HCT116 (cell line): ENCODE measurements at regions of chr20 and their contacts with region 1.

Region 1: GRCh38 chr20:9407805-9408421 is 106.5 kb upstream of the LAMP5 start:
- DNase-seq: peak; percentile 54
- ATAC-seq: peak; percentile 92
- H3K4me3 ChIP-seq: no peak overlapping the region
- H3K27ac ChIP-seq: no peak overlapping the region
- H3K4me1 ChIP-seq: peaks cover 0 to 14% of the 10 kb centered on the region in 2 experiments; a peak in 3 of 4 replicates
- H3K27me3 ChIP-seq: no peaks in the 10 kb centered on the region
- CTCF ChIP-seq: peak; percentile 63 to 86 (median 74); a peak in 5 of 6 replicates
- POLR2A ChIP-seq: no peak
- RAD21 ChIP-seq: peak; percentile 80

Region 2: DNA sequence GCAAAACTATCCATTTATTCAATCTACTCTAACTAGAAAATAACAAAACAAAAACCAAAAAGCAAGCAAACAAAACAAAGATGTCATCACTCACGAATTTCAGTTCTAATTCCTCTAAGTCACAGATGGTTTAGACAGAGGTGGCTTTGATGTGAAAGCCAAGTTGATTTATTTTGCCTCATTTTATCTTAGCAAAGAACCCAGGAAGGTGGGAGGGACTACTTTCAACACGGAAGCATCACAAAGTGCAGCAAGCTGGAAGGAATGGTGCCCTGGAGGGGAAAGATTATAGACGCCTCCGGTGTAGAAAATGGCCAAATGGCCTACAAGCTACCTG is 194.9 kb after region 1 on chr20:
- CTCF ChIA-PET with region 1: interaction called, 252 read pairs
- POLR2A ChIA-PET with region 1: no interaction called
- RAD21 ChIA-PET with region 1: no interaction called
- intact Hi-C with region 1: no loop called
- DNase-seq: no peak
- ATAC-seq: no peak
- H3K4me3 ChIP-seq: no peak overlapping the region
- H3K27ac ChIP-seq: no peak overlapping the region
- H3K4me1 ChIP-seq: no peaks in the 10 kb centered on the region
- H3K27me3 ChIP-seq: 0 out of 2 replicates have a peak, but pooled peaks cover 6% of the 10 kb centered on the region
- CTCF ChIP-seq: no peak
- POLR2A ChIP-seq: no peak
- RAD21 ChIP-seq: no peak

Region 3: GRCh38 chr20:9609887-9610502 is 202.1 kb after region 1 on chr20:
- CTCF ChIA-PET with region 1: interaction called, 252 read pairs
- POLR2A ChIA-PET with region 1: interaction called, 3 read pairs
- RAD21 ChIA-PET with region 1: interaction called, 23 to 27 read pairs
- intact Hi-C with region 1: loop called (anchors 1 kb)
- DNase-seq: peak; percentile 59
- ATAC-seq: peak; percentile 68; the same call in 1 of the 2 replicates
- H3K4me3 ChIP-seq: no peak overlapping the region
- H3K27ac ChIP-seq: no peak overlapping the region
- H3K4me1 ChIP-seq: no peaks in the 10 kb centered on the region
- H3K27me3 ChIP-seq: 0 out of 2 replicates have a peak, but pooled peaks cover 2% of the 10 kb centered on the region
- CTCF ChIP-seq: peak; percentile 59 to 77 (median 64); a peak in 5 of 6 replicates
- POLR2A ChIP-seq: no peak
- RAD21 ChIP-seq: peak; percentile 69

Region 4: GRCh38 chr20:10090588-10091166 is 682.8 kb after region 1 on chr20:
- CTCF ChIA-PET with region 1: no interaction called
- POLR2A ChIA-PET with region 1: no interaction called
- RAD21 ChIA-PET with region 1: no interaction called
- intact Hi-C with region 1: loop called (anchors 5 kb)
- DNase-seq: peak; percentile 38
- ATAC-seq: peak; percentile 91
- H3K4me3 ChIP-seq: no peak overlapping the region
- H3K27ac ChIP-seq: no peak overlapping the region
- H3K4me1 ChIP-seq: peaks cover 5 to 13% of the 10 kb centered on the region in 2 experiments; a peak in 3 of 4 replicates
- H3K27me3 ChIP-seq: no peaks in the 10 kb centered on the region
- CTCF ChIP-seq: peak; percentile 51 to 76 (median 73); a peak in 5 of 6 replicates
- POLR2A ChIP-seq: no peak
- RAD21 ChIP-seq: peak; percentile 80